K562 (cell line): ENCODE measurements at regions of chr1 and their contacts with region 1.

Region 1: DNA sequence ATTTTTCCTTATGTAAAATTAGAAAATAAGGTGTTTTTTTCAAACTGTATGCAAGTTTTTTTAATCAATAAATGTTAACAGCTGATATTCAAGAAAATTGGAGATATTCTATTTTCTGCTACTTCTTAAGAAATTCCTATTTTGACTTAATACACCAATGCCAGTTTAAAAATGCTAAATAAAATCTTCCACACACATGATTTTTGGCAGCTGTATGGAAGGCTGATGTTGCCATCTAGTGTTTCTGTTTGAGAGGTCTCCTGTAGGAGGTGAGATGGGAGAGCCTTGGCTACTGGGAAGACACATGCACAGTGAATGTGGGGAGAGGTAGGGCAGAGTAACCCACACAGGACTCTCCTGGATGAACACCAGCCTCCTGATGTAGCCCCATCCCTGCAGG is 29.2 kb upstream of the OR2B11 start:
- DNase-seq: peak; percentile 28 to 61 (median 43)
- ATAC-seq: peak; percentile 95
- H3K4me3 ChIP-seq: no peak overlapping the region
- H3K27ac ChIP-seq: no peak overlapping the region
- H3K4me1 ChIP-seq: no peaks in the 10 kb centered on the region
- H3K27me3 ChIP-seq: peaks cover 0 to 8% of the 10 kb centered on the region in 2 experiments; a peak in 4 of 5 replicates
- CTCF ChIP-seq: peak; percentile 57 to 82 (median 63)
- EP300 ChIP-seq: no peak
- POLR2A ChIP-seq: no peak
- RAD21 ChIP-seq: peak; percentile 88 to 89

Region 2: GRCh38 chr1:247268390-247269045 is 218.5 kb before region 1 on chr1:
- CTCF ChIA-PET with region 1: no interaction called
- POLR2A ChIA-PET with region 1: no interaction called
- in situ Hi-C with region 1: no loop called
- intact Hi-C with region 1: loop called (anchors 1 kb)
- DNase-seq: no peak
- ATAC-seq: no peak
- H3K4me3 ChIP-seq: no peak overlapping the region
- H3K27ac ChIP-seq: no peak overlapping the region
- H3K4me1 ChIP-seq: no peaks in the 10 kb centered on the region
- H3K27me3 ChIP-seq: no peaks in the 10 kb centered on the region
- CTCF ChIP-seq: no peak
- EP300 ChIP-seq: no peak
- POLR2A ChIP-seq: no peak
- RAD21 ChIP-seq: peak in 1 of 2 experiments; percentile 29; a peak in 2 of 4 replicates

Region 3: DNA sequence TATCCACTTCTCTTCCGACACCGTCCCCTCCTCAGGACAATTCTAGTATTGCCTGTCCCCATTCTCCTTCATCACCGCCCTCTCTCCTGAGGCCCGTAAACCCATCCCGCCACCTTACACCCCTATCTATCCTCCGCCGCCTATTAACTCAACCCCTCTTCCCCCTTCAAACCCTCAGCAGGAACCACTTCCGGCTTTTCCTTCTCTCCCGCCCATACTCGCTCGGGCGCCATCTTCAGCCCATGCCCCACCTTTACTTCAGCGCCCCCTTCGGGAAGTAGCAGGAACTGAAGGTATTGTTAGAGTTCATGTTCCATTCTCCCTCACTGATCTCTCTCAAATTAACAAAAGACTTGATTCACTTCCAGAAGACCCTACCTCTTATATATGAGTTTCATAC is 199.6 kb before region 1 on chr1:
- CTCF ChIA-PET with region 1: no interaction called
- POLR2A ChIA-PET with region 1: no interaction called
- in situ Hi-C with region 1: no loop called
- intact Hi-C with region 1: no loop called
- DNase-seq: peak in 3 of 4 experiments; percentile 40 to 50 (median 50)
- ATAC-seq: peak; percentile 44
- H3K4me3 ChIP-seq: no peak overlapping the region
- H3K27ac ChIP-seq: no peak overlapping the region
- H3K4me1 ChIP-seq: peaks cover 6 to 18% of the 10 kb centered on the region in 2 experiments; a peak in 4 of 5 replicates
- H3K27me3 ChIP-seq: no peaks in the 10 kb centered on the region
- CTCF ChIP-seq: peak; percentile 40 to 70 (median 62)
- EP300 ChIP-seq: no peak
- POLR2A ChIP-seq: no peak
- RAD21 ChIP-seq: peak in 1 of 2 experiments; percentile 54; a peak in 2 of 4 replicates

Region 4: GRCh38 chr1:247390116-247390791 is 96.8 kb before region 1 on chr1:
- CTCF ChIA-PET with region 1: interaction called, 11 read pairs
- POLR2A ChIA-PET with region 1: no interaction called
- in situ Hi-C with region 1: no loop called
- intact Hi-C with region 1: loop called (anchors 1 kb)
- DNase-seq: peak; percentile 89 to 90 (median 90)
- ATAC-seq: peak; percentile 98
- H3K4me3 ChIP-seq: no peak overlapping the region
- H3K27ac ChIP-seq: no peak overlapping the region
- H3K4me1 ChIP-seq: peaks cover 0 to 5% of the 10 kb centered on the region in 2 experiments; a peak in 2 of 5 replicates
- H3K27me3 ChIP-seq: peaks cover 0 to 5% of the 10 kb centered on the region in 2 experiments; a peak in 1 of 5 replicates
- CTCF ChIP-seq: peak; percentile 92 to 95 (median 95)
- EP300 ChIP-seq: 0 out of 2 replicates have a peak, but pooled peaks have one; percentile 5
- POLR2A ChIP-seq: no peak
- RAD21 ChIP-seq: peak; percentile 87 to 88